GM12878 (cell line): ENCODE measurements at regions of chr20 and their contacts with region 1.

Region 1: GRCh38 chr20:1392823-1393506 is at the start of gene FKBP1A:
- DNase-seq: peak; percentile 67
- ATAC-seq: peak; percentile 87
- H3K4me3 ChIP-seq: peak within 1 kb of the TSS; percentile 99
- H3K27ac ChIP-seq: peak within 1 kb of the TSS; percentile 67
- H3K4me1 ChIP-seq: peaks cover 10% of the 10 kb centered on the region
- H3K27me3 ChIP-seq: no peaks in the 10 kb centered on the region; a peak in 2 of 4 replicates
- CTCF ChIP-seq: peak in 2 of 3 experiments; percentile 7 to 8; a peak in 1 of 6 replicates
- EP300 ChIP-seq: peak in 1 of 2 experiments; percentile 43; a peak in 1 of 4 replicates
- POLR2A ChIP-seq: peak; percentile 91
- RAD21 ChIP-seq: no peak
- polyA plus RNA-seq, gene FKBP1A: 150 to 166 TPM

Region 2: GRCh38 chr20:1118336-1119127 is 274.4 kb before region 1 on chr20 and contains the start of gene PSMF1:
- CTCF ChIA-PET with region 1: no interaction called
- POLR2A ChIA-PET with region 1: interaction called, 3 read pairs
- RAD21 ChIA-PET with region 1: no interaction called
- SMC1A ChIA-PET with region 1: no interaction called
- in situ Hi-C with region 1: no loop called
- intact Hi-C with region 1: loop called (anchors 5 kb)
- DNase-seq: peak; percentile 66
- ATAC-seq: peak; percentile 96
- H3K4me3 ChIP-seq: peak within 1 kb of the TSS; percentile 97
- H3K27ac ChIP-seq: peak within 1 kb of the TSS; percentile 64
- H3K4me1 ChIP-seq: peaks cover 18% of the 10 kb centered on the region
- H3K27me3 ChIP-seq: no peaks in the 10 kb centered on the region
- CTCF ChIP-seq: peak in 1 of 3 experiments; percentile 6; a peak in 1 of 6 replicates
- EP300 ChIP-seq: no peak
- POLR2A ChIP-seq: peak; percentile 93
- RAD21 ChIP-seq: no peak
- polyA plus RNA-seq, gene PSMF1: 14.2 to 14.4 TPM

Region 3: DNA sequence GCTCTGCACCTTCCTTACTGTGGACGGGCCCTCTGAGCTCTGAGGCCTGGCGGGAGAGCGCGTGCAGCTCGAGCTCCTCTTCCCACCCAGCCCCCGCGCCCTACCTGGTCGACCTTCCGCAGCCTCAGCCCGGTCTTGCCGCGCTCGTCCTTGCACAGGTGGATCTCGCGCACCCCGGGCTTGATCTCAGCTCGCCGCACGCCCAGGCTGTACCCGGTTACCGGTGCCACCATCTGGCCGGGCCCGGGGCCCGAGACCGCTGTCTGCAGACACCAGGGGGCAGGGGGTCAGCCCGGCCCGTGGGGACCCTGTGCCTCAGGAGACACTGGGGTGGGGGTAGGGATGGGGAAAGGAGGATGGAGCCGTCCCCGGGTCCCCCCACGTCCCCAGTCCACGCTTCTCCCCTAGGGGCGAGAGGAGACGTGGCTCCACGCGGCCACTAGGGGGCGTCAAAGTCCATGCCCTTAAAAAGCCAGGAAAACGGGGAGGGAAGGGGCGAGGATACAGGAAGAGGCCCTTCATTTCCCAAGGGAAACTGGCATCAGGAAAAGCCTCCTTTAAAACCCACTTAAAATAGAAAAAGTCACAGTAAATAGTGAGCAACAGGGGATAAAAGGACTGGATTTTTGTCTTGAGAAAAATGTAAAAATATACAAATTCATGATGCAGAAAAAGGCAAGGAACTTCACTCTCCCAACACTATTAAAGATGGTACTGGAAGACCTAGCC is 79.6 kb before region 1 on chr20:
- CTCF ChIA-PET with region 1: interaction called, 11 read pairs
- POLR2A ChIA-PET with region 1: no interaction called
- RAD21 ChIA-PET with region 1: interaction called, 8 read pairs
- SMC1A ChIA-PET with region 1: interaction called, 11 read pairs
- in situ Hi-C with region 1: no loop called
- intact Hi-C with region 1: loop called (anchors 5 kb)
- DNase-seq: no peak
- ATAC-seq: peak; percentile 90
- H3K4me3 ChIP-seq: no peak overlapping the region
- H3K27ac ChIP-seq: no peak overlapping the region
- H3K4me1 ChIP-seq: peaks cover 6% of the 10 kb centered on the region; the same call in 1 of the 2 replicates
- H3K27me3 ChIP-seq: no peaks in the 10 kb centered on the region
- CTCF ChIP-seq: peak; percentile 87 to 92 (median 89)
- EP300 ChIP-seq: no peak
- POLR2A ChIP-seq: no peak
- RAD21 ChIP-seq: peak; percentile 95

Region 4: GRCh38 chr20:1325173-1326030 is 67.6 kb before region 1 on chr20:
- CTCF ChIA-PET with region 1: interaction called, 41 read pairs
- POLR2A ChIA-PET with region 1: interaction called, 76 read pairs
- RAD21 ChIA-PET with region 1: interaction called, 37 read pairs
- SMC1A ChIA-PET with region 1: interaction called, 52 read pairs
- in situ Hi-C with region 1: no loop called
- intact Hi-C with region 1: loop called (anchors 2 kb)
- DNase-seq: peak; percentile 88
- ATAC-seq: peak; percentile 89
- H3K4me3 ChIP-seq: peak overlapping the region; percentile 90
- H3K27ac ChIP-seq: peak overlapping the region; percentile 94
- H3K4me1 ChIP-seq: peaks cover 34% of the 10 kb centered on the region
- H3K27me3 ChIP-seq: no peaks in the 10 kb centered on the region
- CTCF ChIP-seq: no peak
- EP300 ChIP-seq: peak in 1 of 2 experiments; percentile 74; a peak in 1 of 4 replicates
- POLR2A ChIP-seq: peak; percentile 97
- RAD21 ChIP-seq: no peak

Region 5: DNA sequence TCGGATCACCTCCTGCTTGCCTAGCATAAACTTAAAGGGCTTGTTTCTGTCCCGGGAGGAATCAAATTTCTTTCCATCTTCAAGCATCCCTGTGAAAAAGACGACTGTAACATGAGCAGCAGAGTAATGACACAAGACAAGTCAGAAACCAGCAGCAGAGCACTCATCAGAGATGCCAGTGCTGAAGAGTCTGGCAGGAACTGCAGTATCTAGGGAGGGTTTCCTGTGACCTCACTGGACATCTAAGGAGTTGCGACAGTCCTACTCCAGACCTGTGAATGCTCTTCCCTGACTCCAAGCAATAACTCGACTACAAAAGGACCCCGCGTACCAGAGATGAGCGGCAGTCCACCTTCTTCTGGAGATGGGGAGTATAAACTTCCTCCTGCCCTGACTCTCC is 17.4 kb before region 1 on chr20:
- CTCF ChIA-PET with region 1: interaction called, 16 read pairs
- POLR2A ChIA-PET with region 1: interaction called, 46 read pairs
- RAD21 ChIA-PET with region 1: interaction called, 28 read pairs
- SMC1A ChIA-PET with region 1: interaction called, 45 read pairs
- in situ Hi-C with region 1: no loop called
- intact Hi-C with region 1: no loop called
- DNase-seq: no peak
- ATAC-seq: no peak
- H3K4me3 ChIP-seq: no peak overlapping the region
- H3K27ac ChIP-seq: peak overlapping the region; percentile 85
- H3K4me1 ChIP-seq: peaks cover 35% of the 10 kb centered on the region
- H3K27me3 ChIP-seq: no peaks in the 10 kb centered on the region
- CTCF ChIP-seq: no peak
- EP300 ChIP-seq: no peak
- POLR2A ChIP-seq: no peak
- RAD21 ChIP-seq: no peak

Region 6: GRCh38 chr20:1381753-1382591 is 11.0 kb before region 1 on chr20:
- CTCF ChIA-PET with region 1: interaction called, 16 read pairs
- POLR2A ChIA-PET with region 1: interaction called, 46 read pairs
- RAD21 ChIA-PET with region 1: interaction called, 28 read pairs
- SMC1A ChIA-PET with region 1: interaction called, 45 read pairs
- in situ Hi-C with region 1: no loop called
- intact Hi-C with region 1: no loop called
- DNase-seq: no peak
- ATAC-seq: no peak
- H3K4me3 ChIP-seq: no peak overlapping the region
- H3K27ac ChIP-seq: no peak overlapping the region; the same call in 1 of the 2 replicates
- H3K4me1 ChIP-seq: peaks cover 22% of the 10 kb centered on the region
- H3K27me3 ChIP-seq: no peaks in the 10 kb centered on the region
- CTCF ChIP-seq: no peak
- EP300 ChIP-seq: no peak
- POLR2A ChIP-seq: no peak
- RAD21 ChIP-seq: no peak

Region 7: GRCh38 chr20:1437235-1437904 is 44.4 kb after region 1 on chr20:
- CTCF ChIA-PET with region 1: interaction called, 16 read pairs
- POLR2A ChIA-PET with region 1: no interaction called
- RAD21 ChIA-PET with region 1: interaction called, 5 read pairs
- SMC1A ChIA-PET with region 1: interaction called, 5 read pairs
- in situ Hi-C with region 1: no loop called
- intact Hi-C with region 1: loop called (anchors 5 kb)
- DNase-seq: peak; percentile 40
- ATAC-seq: peak; percentile 77
- H3K4me3 ChIP-seq: no peak overlapping the region
- H3K27ac ChIP-seq: no peak overlapping the region
- H3K4me1 ChIP-seq: peaks cover 11% of the 10 kb centered on the region
- H3K27me3 ChIP-seq: no peaks in the 10 kb centered on the region
- CTCF ChIP-seq: peak; percentile 82 to 84 (median 83)
- EP300 ChIP-seq: no peak
- POLR2A ChIP-seq: no peak
- RAD21 ChIP-seq: peak; percentile 91